ENCODE measurements at regions of chr6 and their contacts with region 1.

Region 1: GRCh38 chr6:142913511-142914047 is 31.4 kb downstream of the HIVEP2 start:
- DNase-seq: peak; percentile 84
- H3K4me3 Mint-ChIP-seq: peak overlapping the region; percentile 72
- H3K27ac Mint-ChIP-seq: peak overlapping the region; percentile 94
- H3K4me1 Mint-ChIP-seq: peaks cover 80% of the 10 kb centered on the region
- H3K27me3 Mint-ChIP-seq: no peaks in the 10 kb centered on the region

Region 2: GRCh38 chr6:142819603-142820337 is 93.8 kb before region 1 on chr6:
- CTCF ChIA-PET with region 1: no interaction called
- POLR2A ChIA-PET with region 1: interaction called, 5 read pairs
- intact Hi-C with region 1: loop called (anchors 1 kb)
- DNase-seq: peak; percentile 63
- H3K4me3 Mint-ChIP-seq: peak overlapping the region; percentile 79
- H3K27ac Mint-ChIP-seq: peak overlapping the region; percentile 97
- H3K4me1 Mint-ChIP-seq: peaks cover 77% of the 10 kb centered on the region
- H3K27me3 Mint-ChIP-seq: peaks cover 2% of the 10 kb centered on the region

Region 3: GRCh38 chr6:142850679-142851423 is 62.7 kb before region 1 on chr6:
- CTCF ChIA-PET with region 1: interaction called, 3 read pairs
- POLR2A ChIA-PET with region 1: interaction called, 6 read pairs
- intact Hi-C with region 1: loop called (anchors 1 kb)
- DNase-seq: peak; percentile 71
- H3K4me3 Mint-ChIP-seq: peak overlapping the region; percentile 58
- H3K27ac Mint-ChIP-seq: peak overlapping the region; percentile 94
- H3K4me1 Mint-ChIP-seq: peaks cover 97% of the 10 kb centered on the region
- H3K27me3 Mint-ChIP-seq: no peaks in the 10 kb centered on the region

Region 4: DNA sequence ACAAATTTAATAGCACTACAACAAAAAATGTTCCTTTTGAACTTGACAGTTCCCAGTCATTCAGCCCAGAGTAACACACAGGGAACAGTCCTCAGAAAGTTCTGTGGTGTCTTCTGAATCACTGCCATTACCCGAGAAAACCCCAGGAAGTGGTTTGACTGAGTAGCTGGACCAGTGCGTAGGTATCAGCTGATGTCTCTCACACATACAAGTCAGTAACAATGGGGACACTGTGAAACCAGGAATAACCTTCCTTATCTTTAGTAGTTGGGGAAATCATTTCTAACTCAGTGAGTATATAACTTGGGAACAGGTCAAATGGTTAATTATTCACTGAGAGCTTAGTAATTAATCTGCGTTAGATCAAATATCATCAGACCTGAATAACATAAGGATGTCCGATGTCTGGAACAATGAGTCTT is 41.7 kb before region 1 on chr6:
- CTCF ChIA-PET with region 1: no interaction called
- POLR2A ChIA-PET with region 1: no interaction called
- intact Hi-C with region 1: loop called (anchors 2 kb)
- DNase-seq: peak; percentile 80
- H3K4me3 Mint-ChIP-seq: peak overlapping the region; percentile 38
- H3K27ac Mint-ChIP-seq: peak overlapping the region; percentile 82
- H3K4me1 Mint-ChIP-seq: peaks cover 85% of the 10 kb centered on the region
- H3K27me3 Mint-ChIP-seq: no peaks in the 10 kb centered on the region

Region 5: GRCh38 chr6:142926494-142927270 is 13.1 kb after region 1 on chr6:
- CTCF ChIA-PET with region 1: interaction called, 3 read pairs
- POLR2A ChIA-PET with region 1: interaction called, 10 read pairs
- intact Hi-C with region 1: loop called (anchors 1 kb)
- DNase-seq: peak; percentile 83
- H3K4me3 Mint-ChIP-seq: peak overlapping the region; percentile 83
- H3K27ac Mint-ChIP-seq: peak overlapping the region; percentile 91
- H3K4me1 Mint-ChIP-seq: peaks cover 55% of the 10 kb centered on the region
- H3K27me3 Mint-ChIP-seq: no peaks in the 10 kb centered on the region